ENCODE measurements at regions of chr5 and their contacts with region 1.

Region 1: GRCh38 chr5:142748568-142749249 is 21.5 kb upstream of the ARHGAP26 start:
- DNase-seq: no peak
- ATAC-seq: peak; percentile 92
- H3K4me3 ChIP-seq: no peak overlapping the region
- H3K27ac ChIP-seq: no peak overlapping the region
- H3K4me1 ChIP-seq: peaks cover 3 to 12% of the 10 kb centered on the region in 2 experiments; a peak in 3 of 4 replicates
- H3K27me3 ChIP-seq: no peaks in the 10 kb centered on the region
- CTCF ChIP-seq: peak; percentile 70 to 95 (median 85)
- POLR2A ChIP-seq: no peak
- RAD21 ChIP-seq: peak; percentile 98

Region 2: DNA sequence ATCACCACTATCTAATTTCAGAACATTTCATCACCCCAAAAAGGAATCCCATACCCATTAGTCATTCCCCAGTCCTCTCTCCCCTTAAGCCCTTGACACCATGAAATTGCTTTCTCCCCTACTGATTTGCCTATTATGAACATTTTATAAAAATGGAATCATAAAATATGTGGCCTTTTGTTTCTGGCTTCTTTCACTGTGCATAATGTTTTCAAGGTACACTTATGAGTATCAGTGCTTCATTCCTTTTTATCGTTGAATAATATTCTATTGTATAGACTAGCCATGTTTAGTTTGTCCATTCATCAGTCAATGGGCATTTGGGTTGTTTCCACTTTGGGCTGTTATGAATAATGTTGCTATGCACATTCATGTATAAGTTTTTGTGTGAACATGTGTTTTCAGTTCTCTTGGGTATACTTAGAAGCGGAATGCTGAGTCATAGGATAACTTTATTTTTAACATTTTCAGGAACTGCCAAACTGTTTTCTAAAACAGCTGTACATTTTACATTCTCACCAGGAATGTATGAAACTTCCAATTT is 22.4 kb before region 1 on chr5:
- CTCF ChIA-PET with region 1: no interaction called
- POLR2A ChIA-PET with region 1: no interaction called
- RAD21 ChIA-PET with region 1: no interaction called
- intact Hi-C with region 1: no loop called
- DNase-seq: no peak
- ATAC-seq: no peak
- H3K4me3 ChIP-seq: no peak overlapping the region
- H3K27ac ChIP-seq: no peak overlapping the region
- H3K4me1 ChIP-seq: peaks cover 0 to 10% of the 10 kb centered on the region in 2 experiments; a peak in 2 of 4 replicates
- H3K27me3 ChIP-seq: no peaks in the 10 kb centered on the region
- CTCF ChIP-seq: no peak
- POLR2A ChIP-seq: no peak
- RAD21 ChIP-seq: no peak

Region 3: DNA sequence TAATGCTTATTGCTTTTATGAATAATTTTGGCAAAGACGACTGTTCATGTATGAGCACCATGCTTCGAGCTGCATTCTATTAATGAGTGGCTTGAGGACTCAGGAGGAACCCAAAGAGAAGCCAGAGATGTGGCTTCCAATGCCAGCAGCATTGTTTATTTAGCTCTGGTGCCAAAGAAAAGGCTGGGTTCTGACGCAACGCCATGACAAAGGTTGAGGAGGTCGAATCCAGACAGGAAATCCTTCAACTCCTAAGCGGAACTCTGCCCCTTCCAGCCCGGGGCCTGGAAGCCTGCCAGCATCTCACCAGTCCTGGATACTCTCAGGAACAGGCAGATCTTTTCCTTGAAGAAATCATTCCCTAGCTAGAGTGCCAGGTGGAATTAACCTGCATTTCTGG is 125.8 kb after region 1 on chr5:
- CTCF ChIA-PET with region 1: interaction called, 75 read pairs
- POLR2A ChIA-PET with region 1: interaction called, 4 read pairs
- RAD21 ChIA-PET with region 1: interaction called in 1 of 2 experiments, 7 read pairs
- intact Hi-C with region 1: no loop called
- DNase-seq: no peak
- ATAC-seq: no peak
- H3K4me3 ChIP-seq: no peak overlapping the region
- H3K27ac ChIP-seq: no peak overlapping the region
- H3K4me1 ChIP-seq: peaks cover 52 to 61% of the 10 kb centered on the region in 2 experiments; a peak in 3 of 4 replicates
- H3K27me3 ChIP-seq: no peaks in the 10 kb centered on the region
- CTCF ChIP-seq: no peak
- POLR2A ChIP-seq: no peak
- RAD21 ChIP-seq: no peak

Region 4: DNA sequence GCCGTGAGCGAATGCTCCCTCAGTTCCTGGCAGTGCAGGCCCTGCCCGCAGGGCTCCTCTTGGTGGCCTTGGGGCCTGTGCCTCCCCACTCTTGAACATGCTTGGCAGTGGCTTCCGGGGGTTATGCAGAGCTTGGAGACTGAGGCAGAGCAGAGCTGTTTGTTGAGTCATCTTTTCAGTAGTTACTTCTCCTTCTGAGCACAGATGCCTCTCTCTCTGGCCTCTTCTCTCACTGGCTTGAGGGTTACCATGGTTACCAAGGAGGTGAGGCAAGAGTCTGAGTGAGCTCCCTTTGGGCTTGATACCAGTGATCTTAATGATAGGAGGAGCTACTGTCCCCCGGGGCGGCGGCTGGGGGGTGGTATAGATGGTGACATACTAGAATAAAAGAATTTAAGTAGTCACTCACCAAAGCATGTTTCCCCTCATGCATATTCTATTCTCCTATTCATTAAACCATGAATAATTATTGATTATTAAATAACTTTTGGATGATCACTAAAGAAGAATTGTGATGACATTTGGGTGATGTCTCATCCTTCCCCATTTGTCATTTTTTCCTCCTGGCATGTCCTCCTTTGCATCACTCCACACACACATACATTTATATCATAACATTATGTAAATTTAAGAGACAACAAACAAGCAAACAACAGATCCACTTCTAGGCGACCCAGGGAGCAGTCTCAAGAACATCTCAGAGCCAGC is 132.5 kb after region 1 on chr5:
- CTCF ChIA-PET with region 1: interaction called, 96 read pairs
- POLR2A ChIA-PET with region 1: interaction called, 4 read pairs
- RAD21 ChIA-PET with region 1: interaction called, 3 to 7 read pairs
- intact Hi-C with region 1: loop called (anchors 1 kb)
- DNase-seq: no peak
- ATAC-seq: 0 out of 2 replicates have a peak, but pooled peaks have one; percentile 26
- H3K4me3 ChIP-seq: no peak overlapping the region
- H3K27ac ChIP-seq: no peak overlapping the region
- H3K4me1 ChIP-seq: peaks cover 12 to 14% of the 10 kb centered on the region in 2 experiments; a peak in 3 of 4 replicates
- H3K27me3 ChIP-seq: no peaks in the 10 kb centered on the region
- CTCF ChIP-seq: no peak
- POLR2A ChIP-seq: no peak
- RAD21 ChIP-seq: no peak

Region 5: DNA sequence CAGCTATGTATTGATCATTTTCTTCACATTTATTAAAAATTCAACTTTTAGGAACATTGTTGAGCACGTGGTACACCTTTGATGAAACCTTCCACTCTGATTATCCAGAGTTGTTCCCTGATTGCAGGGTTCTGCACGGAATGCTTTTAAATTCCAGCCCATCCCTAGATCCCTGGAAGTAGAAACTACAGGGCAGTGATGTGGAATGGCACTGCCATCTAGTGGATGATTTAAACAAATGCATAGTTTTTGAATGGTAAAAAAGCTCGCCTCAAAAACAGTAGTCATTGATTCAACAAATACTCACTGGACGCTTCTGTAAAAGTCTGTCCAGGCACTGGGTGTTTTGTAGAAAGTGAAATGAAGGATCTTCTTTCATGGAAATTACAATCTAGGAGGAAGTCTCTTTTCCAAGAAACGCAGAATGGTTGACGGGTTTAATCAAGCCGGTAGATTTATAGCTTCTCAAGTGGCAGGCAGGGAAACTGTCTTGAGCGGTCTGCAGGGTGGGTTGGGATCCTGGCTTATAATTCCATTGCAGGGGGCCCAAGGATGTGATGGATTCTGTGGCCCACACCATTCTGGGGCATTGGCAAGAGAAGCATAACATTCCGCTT is 139.9 kb after region 1 on chr5:
- CTCF ChIA-PET with region 1: interaction called, 96 read pairs
- POLR2A ChIA-PET with region 1: no interaction called
- RAD21 ChIA-PET with region 1: interaction called, 7 to 15 read pairs
- intact Hi-C with region 1: loop called (anchors 2 kb)
- DNase-seq: no peak
- ATAC-seq: peak; percentile 78
- H3K4me3 ChIP-seq: no peak overlapping the region
- H3K27ac ChIP-seq: no peak overlapping the region
- H3K4me1 ChIP-seq: peaks cover 6 to 10% of the 10 kb centered on the region in 2 experiments; a peak in 1 of 4 replicates
- H3K27me3 ChIP-seq: no peaks in the 10 kb centered on the region
- CTCF ChIP-seq: peak; percentile 59 to 84 (median 80)
- POLR2A ChIP-seq: no peak
- RAD21 ChIP-seq: peak; percentile 82

Region 6: GRCh38 chr5:142915813-142916424 is 167.2 kb after region 1 on chr5:
- CTCF ChIA-PET with region 1: interaction called, 13 read pairs
- POLR2A ChIA-PET with region 1: no interaction called
- RAD21 ChIA-PET with region 1: no interaction called
- intact Hi-C with region 1: no loop called
- DNase-seq: no peak
- ATAC-seq: peak; percentile 87
- H3K4me3 ChIP-seq: no peak overlapping the region
- H3K27ac ChIP-seq: no peak overlapping the region
- H3K4me1 ChIP-seq: peaks cover 15% of the 10 kb centered on the region in 2 experiments; a peak in 3 of 4 replicates
- H3K27me3 ChIP-seq: no peaks in the 10 kb centered on the region
- CTCF ChIP-seq: peak; percentile 73 to 84 (median 75); a peak in 5 of 6 replicates
- POLR2A ChIP-seq: no peak
- RAD21 ChIP-seq: peak; percentile 75

Measured in HCT116 (cell line).